Posterior cingulate gyrus (tissue), 11 donors: ENCODE measurements at regions of chr19 and their contacts with region 1.

Region 1: GRCh38 chr19:51703575-51704515 is 10.7 kb downstream of the SPACA6 start:
- DNase-seq: peak; percentile 85 to 99 (median 93)

Region 2: DNA sequence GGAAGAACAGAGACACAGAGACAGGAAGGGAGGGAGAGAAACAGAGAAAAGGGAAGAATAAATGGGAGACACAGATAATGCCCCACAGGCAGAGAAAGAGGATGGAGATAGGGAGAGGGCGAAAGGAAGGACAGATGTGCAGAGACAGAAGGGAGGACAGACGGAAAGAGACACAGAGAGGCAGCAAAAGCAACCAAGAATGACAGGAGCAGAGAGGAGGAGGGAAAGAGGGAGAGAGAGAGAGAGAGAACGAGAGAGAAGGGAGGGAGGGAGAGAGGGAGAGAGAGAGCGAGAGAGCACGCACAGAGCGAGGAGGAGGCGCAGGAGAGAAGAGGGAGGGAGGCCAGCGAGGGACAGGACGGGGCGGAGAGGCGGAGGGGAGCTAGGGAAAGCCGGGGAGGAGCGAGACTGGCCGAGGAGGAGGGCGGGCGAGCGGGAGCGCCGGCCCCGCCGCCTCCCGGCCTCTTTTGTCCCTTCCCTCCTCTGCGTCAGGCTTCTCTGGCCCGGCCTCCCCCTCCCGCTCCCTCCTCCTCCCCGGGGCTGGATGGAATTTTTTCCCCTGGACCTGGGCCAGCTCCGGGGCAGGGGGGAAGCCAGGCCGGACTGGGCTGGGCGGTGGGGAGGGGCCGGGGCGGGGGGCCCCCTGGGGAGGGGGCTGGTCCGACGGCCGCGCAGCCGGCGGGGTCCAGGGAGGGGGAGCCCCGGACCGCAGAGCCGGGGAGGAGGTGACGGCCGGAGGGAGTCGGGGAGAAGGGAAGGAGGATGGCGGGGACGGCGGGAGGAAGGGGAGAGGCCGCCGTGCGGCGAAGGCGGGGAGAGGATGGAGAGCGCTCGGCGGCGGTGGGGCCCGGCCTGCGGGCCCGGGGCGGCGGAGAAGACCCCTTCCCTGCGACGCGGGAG is 14.9 kb before region 1 on chr19:
- intact Hi-C with region 1: loop called (anchors 1 kb)
- DNase-seq: peak; percentile 83 to 99 (median 92)